Activated T-helper 2 cell treated with anti-CD3 and anti-CD28 coated beads, Interferon-gamma antibody, Interleukin-2, Interleukin-4, amounts not matched to agents 10 μg/mL and 5 μg/mL and 100 μg/mL, durations not matched to agents 14 hours and 24 hours and 36 hours (primary cell): ENCODE measurements at regions of chr19 and their contacts with region 1.

Region 1: DNA sequence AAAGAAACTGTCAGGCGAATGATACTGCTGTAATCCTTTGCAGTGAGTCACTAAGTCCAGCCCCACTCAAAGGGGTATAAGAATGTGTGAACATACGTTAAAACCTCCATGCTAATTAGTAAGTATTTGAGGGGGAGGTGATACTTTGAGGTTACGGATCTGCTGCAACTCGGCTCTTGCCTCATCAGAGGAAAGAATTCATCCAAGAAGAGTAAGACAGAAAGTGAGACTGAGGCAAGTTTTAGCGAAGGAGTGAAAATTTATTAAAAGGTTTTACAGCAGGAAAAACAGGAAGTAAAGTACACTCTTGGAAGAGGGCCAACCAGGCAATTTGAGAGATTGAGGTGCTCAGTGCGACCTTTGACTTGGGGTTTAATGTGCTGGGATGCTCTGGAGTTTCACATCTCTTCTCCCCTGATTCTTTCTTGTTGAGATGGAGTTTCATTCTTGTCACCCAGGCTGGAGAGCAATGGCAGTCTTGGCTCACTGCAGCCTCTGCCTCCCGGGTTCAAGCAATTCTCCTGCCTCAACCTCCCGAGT is 9.8 kb downstream of the CLEC4M start:
- DNase-seq: no peak
- H3K4me3 Mint-ChIP-seq: no peak overlapping the region
- H3K27ac Mint-ChIP-seq: peak overlapping the region; percentile 43
- H3K4me1 Mint-ChIP-seq: peaks cover 14% of the 10 kb centered on the region
- H3K27me3 Mint-ChIP-seq: peaks cover 23% of the 10 kb centered on the region

Region 2: GRCh38 chr19:7751157-7751783 is 21.6 kb before region 1 on chr19:
- intact Hi-C with region 1: loop called (anchors 1 kb)
- DNase-seq: no peak
- H3K4me3 Mint-ChIP-seq: no peak overlapping the region
- H3K27ac Mint-ChIP-seq: no peak overlapping the region
- H3K4me1 Mint-ChIP-seq: peaks cover 8% of the 10 kb centered on the region
- H3K27me3 Mint-ChIP-seq: peaks cover 5% of the 10 kb centered on the region

Region 3: DNA sequence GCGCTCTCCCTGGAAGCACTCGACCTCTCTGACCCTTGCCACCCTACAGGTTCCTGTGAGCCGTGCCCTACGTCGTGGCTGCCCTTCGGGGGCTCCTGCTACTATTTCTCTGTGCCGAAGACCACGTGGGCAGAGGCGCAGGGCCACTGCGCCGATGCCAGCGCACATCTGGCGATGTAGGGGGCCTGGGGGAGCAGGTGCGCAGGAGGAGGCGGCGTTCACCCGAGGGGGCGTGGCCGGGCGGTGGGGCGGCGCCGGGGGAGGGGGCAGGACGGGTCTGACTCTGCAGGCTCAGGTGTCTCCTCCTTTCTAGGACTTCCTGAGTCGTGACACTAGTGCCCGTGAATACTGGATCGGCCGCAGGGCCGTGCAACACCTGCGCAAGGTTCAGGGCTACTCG is 16.6 kb after region 1 on chr19:
- intact Hi-C with region 1: no loop called
- DNase-seq: no peak
- H3K4me3 Mint-ChIP-seq: no peak overlapping the region
- H3K27ac Mint-ChIP-seq: no peak overlapping the region
- H3K4me1 Mint-ChIP-seq: no peaks in the 10 kb centered on the region
- H3K27me3 Mint-ChIP-seq: peaks cover 39% of the 10 kb centered on the region

Region 4: GRCh38 chr19:7806876-7807275 is 34.1 kb after region 1 on chr19:
- intact Hi-C with region 1: loop called (anchors 2 kb)
- DNase-seq: no peak
- H3K4me3 Mint-ChIP-seq: no peak overlapping the region
- H3K27ac Mint-ChIP-seq: no peak overlapping the region
- H3K4me1 Mint-ChIP-seq: peaks cover 4% of the 10 kb centered on the region
- H3K27me3 Mint-ChIP-seq: peaks cover 48% of the 10 kb centered on the region